SK-N-SH (cell line): ENCODE measurements at regions of chr11 and their contacts with region 1.

Region 1: GRCh38 chr11:4072668-4073285 is 21.8 kb upstream of the RRM1 start:
- DNase-seq: peak; percentile 70
- H3K4me3 ChIP-seq: no peak overlapping the region; a peak in 1 of 4 replicates
- H3K27ac ChIP-seq: peak overlapping the region in 1 of 2 experiments; percentile 72; a peak in 2 of 4 replicates
- H3K4me1 ChIP-seq: peaks cover 0 to 12% of the 10 kb centered on the region in 2 experiments; a peak in 2 of 4 replicates
- H3K27me3 ChIP-seq: no peaks in the 10 kb centered on the region
- CTCF ChIP-seq: peak; percentile 88
- EP300 ChIP-seq: no peak
- RAD21 ChIP-seq: peak; percentile 99

Region 2: DNA sequence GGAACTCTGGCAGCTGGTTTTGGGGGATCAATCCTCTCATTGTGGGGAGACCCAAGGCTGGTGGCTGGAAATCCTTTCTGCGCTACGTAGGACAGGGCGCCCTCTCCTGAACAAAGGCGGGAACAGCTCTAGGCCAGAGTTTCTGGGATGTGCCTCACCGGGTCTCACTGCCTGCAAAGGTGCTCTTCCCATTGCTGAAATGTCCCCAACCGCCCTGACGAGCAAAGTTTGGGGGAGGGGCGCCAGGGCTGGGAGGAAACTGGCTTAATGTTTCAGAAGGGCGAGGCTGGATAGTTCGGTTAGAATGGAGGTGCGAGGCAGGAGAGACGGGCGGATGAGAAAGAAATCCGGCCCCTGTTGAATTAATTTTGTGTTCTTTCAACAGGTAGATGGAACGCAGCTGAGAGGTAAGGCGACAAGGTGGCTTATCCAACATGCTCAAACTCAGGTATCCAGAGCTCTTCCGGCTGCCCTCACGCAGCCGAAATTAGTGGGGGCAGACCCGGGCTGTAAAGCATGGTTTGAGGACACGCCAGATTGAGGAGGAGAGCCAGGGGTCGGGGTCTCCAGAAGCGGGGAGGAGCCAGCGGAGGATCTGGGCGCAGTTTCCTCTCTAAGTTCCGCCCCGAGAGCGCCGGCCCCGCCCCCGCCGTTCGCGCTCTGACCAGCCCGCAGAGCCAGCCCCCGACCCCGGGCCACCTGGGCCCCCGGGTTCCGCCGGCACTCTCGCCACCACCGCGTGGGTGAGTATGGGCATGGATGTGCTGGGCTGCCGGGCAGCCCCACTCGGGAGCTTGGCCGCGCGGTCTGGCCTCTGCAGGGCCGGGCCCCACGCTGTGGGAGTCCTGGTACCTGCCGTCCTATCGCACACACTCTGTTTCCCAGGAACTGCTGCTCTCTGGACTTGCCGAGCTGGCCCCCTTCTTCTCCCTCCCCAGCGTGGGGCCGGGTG is 264.6 kb before region 1 on chr11 and contains the start of gene PGAP2:
- CTCF ChIA-PET with region 1: interaction called, 19 read pairs
- POLR2A ChIA-PET with region 1: no interaction called
- DNase-seq: peak; percentile 90
- H3K4me3 ChIP-seq: peak within 1 kb of the TSS; percentile 70 to 83
- H3K27ac ChIP-seq: peak within 1 kb of the TSS in 1 of 2 experiments; percentile 56; a peak in 2 of 4 replicates
- H3K4me1 ChIP-seq: peaks cover 3 to 8% of the 10 kb centered on the region in 2 experiments; a peak in 3 of 4 replicates
- H3K27me3 ChIP-seq: no peaks in the 10 kb centered on the region
- CTCF ChIP-seq: peak; percentile 74
- EP300 ChIP-seq: no peak
- RAD21 ChIP-seq: peak; percentile 66
- polyA plus RNA-seq, gene PGAP2: 41.3 and 44.1 TPM in 2 replicates

Region 3: DNA sequence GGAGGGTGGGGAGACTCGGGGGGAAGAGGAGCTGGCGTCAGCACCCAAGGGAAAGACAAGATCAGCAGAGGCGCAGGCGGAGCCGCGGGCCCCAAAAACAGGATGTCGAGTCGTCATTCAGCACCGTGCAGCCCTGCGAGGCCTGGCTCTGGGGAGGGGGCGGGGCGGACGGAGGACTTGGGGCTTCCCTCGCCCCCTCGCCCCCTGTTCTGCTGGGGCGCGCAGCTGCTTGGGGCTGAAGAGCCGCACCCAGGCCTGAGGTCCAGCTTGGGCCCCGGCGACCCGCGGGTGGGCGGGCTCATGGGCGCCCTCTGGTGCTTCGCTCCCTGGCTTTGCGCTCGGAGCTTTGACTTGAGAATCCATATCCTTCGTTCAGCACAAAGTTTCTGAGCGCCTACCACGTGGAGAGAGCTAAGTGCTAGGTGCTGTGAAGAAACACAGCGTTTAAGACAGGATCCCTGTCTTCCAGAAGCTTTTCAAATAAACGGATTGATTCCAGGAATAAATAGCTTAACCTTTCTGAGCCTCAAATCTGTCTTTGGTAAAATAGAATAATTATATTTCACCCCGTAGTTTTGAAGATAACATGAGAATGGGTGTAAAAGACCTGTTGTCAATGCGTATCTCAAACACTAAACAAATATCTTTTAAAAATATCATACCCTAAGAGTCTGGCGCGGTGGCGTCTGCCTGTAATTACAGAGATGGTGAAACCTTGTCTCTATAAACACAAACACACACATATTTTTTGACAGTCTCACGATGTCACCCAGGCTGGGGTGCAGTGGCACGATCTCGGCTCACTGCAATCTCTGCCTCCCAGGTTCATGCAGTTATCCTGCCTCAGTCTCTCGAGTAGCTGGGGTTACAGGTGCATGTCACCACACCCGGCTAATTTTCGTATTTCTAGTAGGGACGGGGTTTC is 231.1 kb before region 1 on chr11:
- CTCF ChIA-PET with region 1: interaction called, 636 read pairs
- POLR2A ChIA-PET with region 1: interaction called, 3 read pairs
- DNase-seq: peak; percentile 87
- H3K4me3 ChIP-seq: peak overlapping the region; percentile 67 to 71
- H3K27ac ChIP-seq: peak overlapping the region; percentile 82 to 84
- H3K4me1 ChIP-seq: peaks cover 5 to 17% of the 10 kb centered on the region in 2 experiments; a peak in 2 of 4 replicates
- H3K27me3 ChIP-seq: no peaks in the 10 kb centered on the region
- CTCF ChIP-seq: peak; percentile 80
- EP300 ChIP-seq: no peak
- RAD21 ChIP-seq: peak; percentile 50

Region 4: GRCh38 chr11:3867209-3868091 is 205.3 kb before region 1 on chr11:
- CTCF ChIA-PET with region 1: interaction called, 31 read pairs
- POLR2A ChIA-PET with region 1: no interaction called
- DNase-seq: peak; percentile 34
- H3K4me3 ChIP-seq: no peak overlapping the region
- H3K27ac ChIP-seq: peak overlapping the region in 1 of 2 experiments; percentile 78; a peak in 2 of 4 replicates
- H3K4me1 ChIP-seq: peaks cover 0 to 10% of the 10 kb centered on the region in 2 experiments; a peak in 2 of 4 replicates
- H3K27me3 ChIP-seq: no peaks in the 10 kb centered on the region
- CTCF ChIP-seq: no peak
- EP300 ChIP-seq: 0 out of 4 replicates have a peak, but pooled peaks of 1 of the 2 experiments have one; percentile 17
- RAD21 ChIP-seq: no peak

Region 5: DNA sequence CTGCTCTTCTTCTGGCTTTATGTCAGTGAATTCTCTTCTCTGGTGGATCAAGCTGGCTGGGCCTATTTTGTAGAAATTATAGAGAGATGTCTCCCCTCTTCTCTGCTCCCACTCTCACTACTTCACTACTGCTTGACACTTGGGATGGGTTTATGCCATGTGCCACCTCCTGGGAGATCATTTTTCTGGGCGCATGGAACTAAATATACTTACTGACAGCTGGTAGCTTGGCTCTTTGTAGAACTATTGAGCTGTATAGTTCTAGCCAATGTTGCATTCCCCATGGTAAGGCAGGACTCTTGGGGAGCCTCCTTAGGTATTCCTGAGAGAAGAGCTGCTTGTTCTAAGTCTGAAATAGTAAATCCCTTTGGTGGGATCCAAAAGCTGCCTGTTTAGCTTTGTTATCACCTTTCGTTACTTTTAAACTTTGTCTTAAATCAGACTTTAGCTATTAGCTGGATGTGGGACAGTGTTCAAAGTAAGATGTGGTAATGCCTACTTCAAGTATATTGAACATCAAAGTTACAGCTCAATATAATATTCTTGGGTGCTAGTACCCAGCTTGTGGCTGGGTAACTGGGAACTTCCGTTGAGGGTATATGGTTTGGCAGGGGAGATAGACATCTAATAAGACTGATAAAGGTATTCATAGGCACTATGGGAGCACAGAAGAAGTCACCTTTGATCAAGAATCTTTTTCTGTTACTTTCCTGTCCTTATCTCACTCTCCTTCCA is 65.7 kb before region 1 on chr11:
- CTCF ChIA-PET with region 1: interaction called, 10 read pairs
- POLR2A ChIA-PET with region 1: no interaction called
- DNase-seq: no peak
- H3K4me3 ChIP-seq: no peak overlapping the region
- H3K27ac ChIP-seq: no peak overlapping the region
- H3K4me1 ChIP-seq: no peaks in the 10 kb centered on the region
- H3K27me3 ChIP-seq: no peaks in the 10 kb centered on the region
- CTCF ChIP-seq: no peak
- EP300 ChIP-seq: no peak
- RAD21 ChIP-seq: no peak

Region 6: GRCh38 chr11:4039011-4039410 is 33.8 kb before region 1 on chr11:
- CTCF ChIA-PET with region 1: interaction called, 12 read pairs
- POLR2A ChIA-PET with region 1: no interaction called
- DNase-seq: no peak
- H3K4me3 ChIP-seq: no peak overlapping the region
- H3K27ac ChIP-seq: no peak overlapping the region
- H3K4me1 ChIP-seq: peaks cover 0 to 4% of the 10 kb centered on the region in 2 experiments; a peak in 1 of 4 replicates
- H3K27me3 ChIP-seq: no peaks in the 10 kb centered on the region
- CTCF ChIP-seq: no peak
- EP300 ChIP-seq: no peak
- RAD21 ChIP-seq: no peak

Region 7: DNA sequence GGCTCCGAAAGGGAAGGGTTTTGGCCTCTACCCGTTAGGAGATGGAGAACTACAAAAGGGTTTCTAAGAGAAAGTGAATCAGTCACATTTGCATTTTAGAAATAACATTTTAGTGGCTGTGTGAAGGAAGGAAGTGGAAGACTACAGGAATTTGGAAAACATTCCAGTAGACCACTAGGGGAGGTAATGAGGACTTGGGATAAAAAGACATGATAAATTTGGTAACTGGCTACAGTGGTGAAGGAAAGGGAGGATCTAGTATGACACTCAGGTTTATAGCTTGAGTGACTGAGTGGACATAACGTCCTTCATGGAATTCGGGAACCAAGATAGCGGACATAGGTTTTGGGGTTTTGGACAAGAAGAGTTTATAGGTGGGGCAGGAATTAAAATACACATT is 14.8 kb after region 1 on chr11:
- CTCF ChIA-PET with region 1: interaction called, 76 read pairs
- POLR2A ChIA-PET with region 1: no interaction called
- DNase-seq: no peak
- H3K4me3 ChIP-seq: no peak overlapping the region
- H3K27ac ChIP-seq: no peak overlapping the region
- H3K4me1 ChIP-seq: no peaks in the 10 kb centered on the region
- H3K27me3 ChIP-seq: no peaks in the 10 kb centered on the region
- CTCF ChIP-seq: peak; percentile 41
- EP300 ChIP-seq: no peak
- RAD21 ChIP-seq: no peak

Region 8: GRCh38 chr11:4125141-4125540 is 52.4 kb after region 1 on chr11:
- CTCF ChIA-PET with region 1: no interaction called
- POLR2A ChIA-PET with region 1: no interaction called
- DNase-seq: no peak
- H3K4me3 ChIP-seq: no peak overlapping the region
- H3K27ac ChIP-seq: no peak overlapping the region
- H3K4me1 ChIP-seq: no peaks in the 10 kb centered on the region
- H3K27me3 ChIP-seq: no peaks in the 10 kb centered on the region
- CTCF ChIP-seq: no peak
- EP300 ChIP-seq: no peak
- RAD21 ChIP-seq: no peak

Region 9: GRCh38 chr11:4140067-4140636 is 67.4 kb after region 1 on chr11:
- CTCF ChIA-PET with region 1: no interaction called
- POLR2A ChIA-PET with region 1: no interaction called
- DNase-seq: no peak
- H3K4me3 ChIP-seq: no peak overlapping the region
- H3K27ac ChIP-seq: no peak overlapping the region
- H3K4me1 ChIP-seq: no peaks in the 10 kb centered on the region
- H3K27me3 ChIP-seq: no peaks in the 10 kb centered on the region
- CTCF ChIP-seq: no peak
- EP300 ChIP-seq: no peak
- RAD21 ChIP-seq: no peak